Colonic mucosa (tissue), 4 donors: ENCODE measurements at regions of chr1 and their contacts with region 1.

Region 1: DNA sequence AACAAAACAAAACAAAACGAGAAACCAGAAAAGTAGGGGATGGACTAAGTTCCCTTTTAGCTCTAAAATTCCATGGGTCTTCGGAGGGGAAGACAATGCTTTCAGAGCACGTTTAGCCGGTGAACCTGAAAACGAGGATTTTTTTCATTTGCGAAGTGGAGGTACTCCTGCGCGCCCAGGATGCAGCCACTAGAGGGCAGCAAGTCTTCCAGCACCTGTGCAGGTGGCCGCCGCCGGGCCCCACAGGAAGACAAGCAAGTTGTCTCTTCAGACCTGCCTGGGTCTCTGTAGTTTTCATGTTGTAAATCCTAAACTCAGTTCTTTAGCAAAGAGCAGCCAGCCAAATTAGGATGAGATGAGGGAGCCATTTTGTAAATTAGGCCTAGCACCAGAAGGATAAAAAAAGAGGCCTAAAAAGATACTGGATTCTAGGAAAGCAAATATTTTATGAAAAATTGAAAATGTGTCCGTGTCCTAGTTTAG is 17.7 kb upstream of the SNX27 start:
- DNase-seq: peak; percentile 87
- H3K4me3 ChIP-seq: no peak overlapping the region
- H3K27ac ChIP-seq: no peak overlapping the region
- H3K4me1 ChIP-seq: no peaks in the 10 kb centered on the region
- H3K27me3 ChIP-seq: no peaks in the 10 kb centered on the region
- CTCF ChIP-seq: peak; percentile 92

Region 2: GRCh38 chr1:151443846-151444782 is 150.1 kb before region 1 on chr1:
- intact Hi-C with region 1: loop called (anchors 10 kb)
- DNase-seq: peak; percentile 79
- H3K4me3 ChIP-seq: no peak overlapping the region
- H3K27ac ChIP-seq: no peak overlapping the region
- H3K4me1 ChIP-seq: no peaks in the 10 kb centered on the region
- H3K27me3 ChIP-seq: no peaks in the 10 kb centered on the region
- CTCF ChIP-seq: peak; percentile 77

Region 3: DNA sequence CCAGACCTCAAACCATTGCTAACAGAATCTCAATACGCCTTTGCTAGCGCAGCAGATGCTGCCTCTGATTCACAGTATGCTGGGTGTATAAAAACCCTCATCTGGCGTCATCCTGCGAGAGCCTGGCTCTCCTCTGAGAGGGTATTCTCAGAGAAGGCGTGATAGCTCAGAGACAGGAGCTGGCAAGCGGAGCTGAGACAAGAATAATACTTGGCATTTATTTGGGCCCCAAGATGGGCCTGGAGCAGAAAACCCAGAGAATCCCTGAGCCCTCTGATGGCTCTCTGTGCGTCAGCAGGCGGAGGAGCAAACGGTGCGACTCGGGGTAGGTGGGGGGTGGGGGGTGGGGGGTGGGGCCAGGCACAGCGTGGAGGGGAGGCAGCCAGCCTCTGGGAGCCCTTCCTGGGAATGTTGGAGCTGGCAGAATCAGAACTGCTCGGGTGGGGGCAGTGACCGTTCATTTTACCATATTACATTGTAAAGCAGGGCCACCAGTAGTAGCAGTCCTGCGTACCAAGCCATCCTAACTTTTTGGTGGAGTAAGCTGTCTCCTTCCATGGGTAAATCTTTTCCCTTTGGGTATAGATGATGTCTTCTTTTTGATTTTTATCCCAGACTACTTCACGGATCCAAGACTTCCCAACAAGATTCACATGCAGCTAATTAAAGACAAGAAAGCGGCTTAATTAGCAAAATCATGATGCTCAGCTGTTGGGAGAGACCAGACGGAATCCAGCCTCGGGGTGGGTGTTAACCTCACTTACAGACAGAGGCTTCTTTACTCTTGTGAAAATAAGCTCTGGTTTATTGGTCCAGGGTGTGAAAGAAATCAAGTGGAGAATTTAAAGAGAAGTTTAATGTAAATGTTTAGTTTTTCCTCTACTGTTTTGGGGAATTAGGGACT is 134.2 kb after region 1 on chr1:
- intact Hi-C with region 1: no loop called
- DNase-seq: peak; percentile 18
- H3K4me3 ChIP-seq: no peak overlapping the region
- H3K27ac ChIP-seq: no peak overlapping the region
- H3K4me1 ChIP-seq: no peaks in the 10 kb centered on the region
- H3K27me3 ChIP-seq: no peaks in the 10 kb centered on the region
- CTCF ChIP-seq: no peak

Region 4: GRCh38 chr1:151739590-151740375 is 145.6 kb after region 1 on chr1:
- intact Hi-C with region 1: loop called (anchors 5 kb)
- DNase-seq: no peak
- H3K4me3 ChIP-seq: no peak overlapping the region
- H3K27ac ChIP-seq: no peak overlapping the region
- H3K4me1 ChIP-seq: no peaks in the 10 kb centered on the region
- H3K27me3 ChIP-seq: no peaks in the 10 kb centered on the region
- CTCF ChIP-seq: no peak

Region 5: GRCh38 chr1:151820940-151821339 is 226.8 kb after region 1 on chr1:
- intact Hi-C with region 1: no loop called
- DNase-seq: no peak
- H3K4me3 ChIP-seq: no peak overlapping the region
- H3K27ac ChIP-seq: no peak overlapping the region
- H3K4me1 ChIP-seq: no peaks in the 10 kb centered on the region
- H3K27me3 ChIP-seq: no peaks in the 10 kb centered on the region
- CTCF ChIP-seq: no peak

Region 6: GRCh38 chr1:151839457-151840405 is 245.5 kb after region 1 on chr1 and contains the start of gene C2CD4D:
- intact Hi-C with region 1: loop called (anchors 10 kb)
- DNase-seq: peak; percentile 83
- H3K4me3 ChIP-seq: peak within 1 kb of the TSS; percentile 35
- H3K27ac ChIP-seq: peak within 1 kb of the TSS; percentile 90
- H3K4me1 ChIP-seq: no peaks in the 10 kb centered on the region
- H3K27me3 ChIP-seq: peaks cover 6% of the 10 kb centered on the region
- CTCF ChIP-seq: no peak
- total RNA-seq, gene C2CD4D: 0.85 to 1.6 TPM